Activated CD8-positive, alpha-beta T cell treated with anti-CD3 and anti-CD28 coated beads for 36 hours (primary cell): ENCODE measurements at regions of chr1 and their contacts with region 1.

Region 1: GRCh38 chr1:67214420-67215174 is 48.3 kb downstream of the IL23R start:
- DNase-seq: peak; percentile 79
- ATAC-seq: peak; percentile 26
- H3K4me3 Mint-ChIP-seq: no peak overlapping the region
- H3K27ac Mint-ChIP-seq: no peak overlapping the region
- H3K4me1 Mint-ChIP-seq: peaks cover 39% of the 10 kb centered on the region
- H3K27me3 Mint-ChIP-seq: no peaks in the 10 kb centered on the region
- CTCF ChIP-seq: peak; percentile 58

Region 2: GRCh38 chr1:66996018-66996682 is 218.4 kb before region 1 on chr1:
- CTCF ChIA-PET with region 1: interaction called, 51 read pairs
- POLR2A ChIA-PET with region 1: no interaction called
- intact Hi-C with region 1: loop called (anchors 10 kb)
- DNase-seq: peak; percentile 83
- ATAC-seq: peak; percentile 88
- H3K4me3 Mint-ChIP-seq: no peak overlapping the region
- H3K27ac Mint-ChIP-seq: no peak overlapping the region
- H3K4me1 Mint-ChIP-seq: peaks cover 17% of the 10 kb centered on the region
- H3K27me3 Mint-ChIP-seq: no peaks in the 10 kb centered on the region
- CTCF ChIP-seq: peak; percentile 71

Region 3: DNA sequence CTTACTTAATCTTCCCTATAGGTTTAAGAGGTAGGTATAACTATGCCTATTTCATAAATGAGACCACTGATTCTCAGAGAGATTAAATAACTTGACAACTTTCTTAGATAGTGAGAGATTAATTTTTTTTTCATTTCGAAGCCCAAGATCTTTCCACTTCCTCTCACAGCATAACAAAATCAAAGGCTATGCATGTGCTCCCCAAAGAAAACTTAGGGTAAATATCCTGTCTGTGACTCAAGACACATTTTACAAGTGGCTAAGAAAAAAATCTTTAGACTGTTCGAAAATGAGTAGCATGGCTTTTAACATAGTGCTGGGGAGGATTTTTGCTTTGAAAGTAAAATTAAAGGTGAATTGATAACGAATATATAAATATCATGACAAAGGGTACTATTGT is 71.7 kb before region 1 on chr1:
- CTCF ChIA-PET with region 1: interaction called, 200 read pairs
- POLR2A ChIA-PET with region 1: no interaction called
- intact Hi-C with region 1: loop called (anchors 5 kb)
- DNase-seq: no peak
- ATAC-seq: peak; percentile 77
- H3K4me3 Mint-ChIP-seq: no peak overlapping the region
- H3K27ac Mint-ChIP-seq: peak overlapping the region; percentile 36
- H3K4me1 Mint-ChIP-seq: peaks cover 34% of the 10 kb centered on the region
- H3K27me3 Mint-ChIP-seq: no peaks in the 10 kb centered on the region
- CTCF ChIP-seq: no peak

Region 4: GRCh38 chr1:67174716-67175284 is 39.8 kb before region 1 on chr1:
- CTCF ChIA-PET with region 1: interaction called, 70 read pairs
- POLR2A ChIA-PET with region 1: no interaction called
- intact Hi-C with region 1: loop called (anchors 2 kb)
- DNase-seq: peak; percentile 54
- ATAC-seq: peak; percentile 66
- H3K4me3 Mint-ChIP-seq: no peak overlapping the region
- H3K27ac Mint-ChIP-seq: peak overlapping the region; percentile 77
- H3K4me1 Mint-ChIP-seq: peaks cover 56% of the 10 kb centered on the region
- H3K27me3 Mint-ChIP-seq: peaks cover under 1% of the 10 kb centered on the region
- CTCF ChIP-seq: no peak

Region 5: GRCh38 chr1:67201891-67202290 is 12.7 kb before region 1 on chr1:
- CTCF ChIA-PET with region 1: interaction called, 52 read pairs
- POLR2A ChIA-PET with region 1: interaction called, 4 read pairs
- intact Hi-C with region 1: no loop called
- DNase-seq: no peak
- ATAC-seq: no peak
- H3K4me3 Mint-ChIP-seq: no peak overlapping the region
- H3K27ac Mint-ChIP-seq: no peak overlapping the region
- H3K4me1 Mint-ChIP-seq: peaks cover 1% of the 10 kb centered on the region
- H3K27me3 Mint-ChIP-seq: peaks cover 3% of the 10 kb centered on the region
- CTCF ChIP-seq: no peak

Region 6: DNA sequence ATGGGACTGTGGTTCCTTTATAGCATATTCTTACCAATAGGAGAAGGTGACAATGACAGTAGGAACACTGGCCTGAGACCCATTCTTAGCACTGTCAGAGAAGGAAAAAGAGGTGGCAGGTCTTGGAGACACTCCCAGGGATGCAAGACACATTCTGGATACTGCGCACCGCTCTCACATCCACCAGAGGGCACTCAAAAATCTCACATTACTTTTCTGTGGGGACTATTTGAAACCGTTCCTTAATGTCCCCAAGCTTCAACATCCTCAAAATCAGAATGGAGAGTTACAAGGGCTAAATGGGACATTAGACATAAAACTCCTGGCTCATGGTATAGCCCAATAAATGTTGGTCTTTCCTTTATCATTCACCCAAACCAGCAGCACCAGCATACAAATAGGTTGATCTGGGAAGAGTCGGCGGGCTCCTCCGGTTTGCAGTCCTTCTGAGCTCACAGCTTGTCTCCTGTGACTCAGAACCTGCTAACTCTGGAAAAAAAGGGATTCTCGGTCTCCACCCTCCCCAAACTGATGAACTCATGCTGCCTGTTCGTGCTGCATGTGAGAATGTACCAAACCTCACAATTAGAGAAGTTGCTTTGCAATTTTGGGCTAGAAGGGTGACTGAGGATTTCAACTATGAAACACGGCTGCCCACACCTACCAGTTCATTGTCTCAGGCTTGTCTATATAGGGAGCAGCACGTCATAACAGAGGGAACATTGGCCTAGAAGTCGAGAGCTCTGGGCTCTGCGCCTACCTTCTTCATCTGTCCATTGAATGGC is 133.3 kb after region 1 on chr1:
- CTCF ChIA-PET with region 1: interaction called, 28 read pairs
- POLR2A ChIA-PET with region 1: interaction called, 3 read pairs
- intact Hi-C with region 1: no loop called
- DNase-seq: peak; percentile 40
- ATAC-seq: peak; percentile 57
- H3K4me3 Mint-ChIP-seq: no peak overlapping the region
- H3K27ac Mint-ChIP-seq: no peak overlapping the region
- H3K4me1 Mint-ChIP-seq: peaks cover 12% of the 10 kb centered on the region
- H3K27me3 Mint-ChIP-seq: no peaks in the 10 kb centered on the region
- CTCF ChIP-seq: peak; percentile 65